ENCODE measurements at regions of chr6 and their contacts with region 1.

Region 1: DNA sequence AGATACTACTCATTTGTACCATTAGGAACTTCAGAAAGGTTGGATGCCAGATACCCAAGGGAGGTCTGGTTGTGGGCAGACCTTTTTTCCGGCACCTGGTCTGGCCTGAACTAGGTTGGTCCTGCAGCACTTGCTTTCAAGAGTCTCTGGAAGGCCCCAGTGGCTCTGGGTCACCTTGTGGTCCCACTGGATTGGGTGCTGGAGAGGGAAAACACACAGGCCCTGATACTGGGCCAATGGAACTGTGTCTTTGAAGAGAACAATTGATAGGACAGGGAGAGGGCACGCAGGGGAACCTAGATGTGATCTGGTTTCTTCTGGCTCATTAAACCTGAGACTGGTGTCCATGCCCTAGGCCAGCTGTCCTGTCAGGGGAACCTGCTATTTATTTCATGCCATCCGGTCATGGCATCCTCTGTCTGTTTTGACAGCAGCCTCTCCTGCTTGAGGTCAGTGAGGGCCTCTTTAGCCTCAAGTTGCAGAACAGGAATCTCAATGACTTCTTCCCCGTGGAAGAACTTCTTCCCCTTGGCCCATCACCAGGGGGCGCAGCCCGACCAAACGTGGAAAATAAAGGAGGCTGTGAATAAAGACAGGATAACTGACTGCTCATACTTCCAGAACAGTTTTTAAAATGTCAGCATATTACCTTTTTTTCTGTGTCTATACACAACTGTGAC is 25.0 kb downstream of the TAF8 start:
- DNase-seq: peak; percentile 73 to 85
- ATAC-seq: peak; percentile 58 to 87 (median 76)
- H3K4me3 ChIP-seq: no peak overlapping the region
- H3K27ac ChIP-seq: no peak overlapping the region
- H3K4me1 ChIP-seq: no peaks in the 10 kb centered on the region
- H3K27me3 ChIP-seq: no peaks in the 10 kb centered on the region
- CTCF ChIP-seq: peak; percentile 78

Region 2: GRCh38 chr6:41477572-41477971 is 597.7 kb before region 1 on chr6:
- intact Hi-C with region 1: no loop called
- DNase-seq: no peak
- ATAC-seq: no peak
- H3K4me3 ChIP-seq: no peak overlapping the region
- H3K27ac ChIP-seq: no peak overlapping the region
- H3K4me1 ChIP-seq: no peaks in the 10 kb centered on the region
- H3K27me3 ChIP-seq: peaks cover 0 to 13% (median 4%) of the 10 kb centered on the region in 3 donors
- CTCF ChIP-seq: no peak

Region 3: DNA sequence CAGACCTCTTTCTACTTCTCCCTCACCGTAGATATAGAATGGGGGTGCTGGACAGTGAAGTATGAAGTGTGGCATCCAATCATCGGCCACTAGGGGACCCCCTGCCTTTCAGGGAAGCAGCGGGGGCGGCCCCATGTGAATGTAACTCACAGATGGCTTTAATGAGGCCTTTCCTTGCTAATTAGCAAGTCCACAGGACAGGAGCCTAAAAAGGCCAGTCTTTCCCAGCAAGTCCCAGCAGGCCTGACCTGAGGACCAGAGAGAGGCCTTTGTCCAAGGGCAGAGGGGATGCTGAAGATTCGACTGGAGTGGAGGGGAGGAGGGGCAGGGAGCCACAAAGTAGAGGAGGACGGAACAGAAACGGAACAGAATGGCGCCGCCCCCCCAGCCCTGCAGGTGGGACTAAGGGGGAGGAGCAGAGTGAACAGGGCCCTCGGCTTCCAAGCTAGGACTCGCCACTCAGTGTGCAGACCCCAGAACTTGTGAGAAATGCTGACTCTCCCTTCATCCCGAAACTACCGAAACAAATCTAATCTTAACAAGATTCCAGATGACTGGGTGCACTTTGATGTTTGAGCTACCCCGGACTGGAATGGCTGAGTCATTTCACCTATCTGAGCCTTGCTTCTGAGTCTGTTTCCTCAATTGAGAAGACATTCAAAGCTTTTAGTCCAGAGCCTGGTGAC is 61.4 kb after region 1 on chr6:
- intact Hi-C with region 1: no loop called
- DNase-seq: no peak
- ATAC-seq: no peak
- H3K4me3 ChIP-seq: no peak overlapping the region
- H3K27ac ChIP-seq: no peak overlapping the region
- H3K4me1 ChIP-seq: no peaks in the 10 kb centered on the region
- H3K27me3 ChIP-seq: peaks cover 0 to 16% (median 0%) of the 10 kb centered on the region in 3 donors
- CTCF ChIP-seq: no peak

Region 4: GRCh38 chr6:42158011-42158410 is 82.7 kb after region 1 on chr6:
- intact Hi-C with region 1: loop called in 1 of 2 experiments (anchors 2 kb)
- DNase-seq: no peak
- ATAC-seq: peak in 1 of 4 donors; percentile 23
- H3K4me3 ChIP-seq: no peak overlapping the region
- H3K27ac ChIP-seq: no peak overlapping the region
- H3K4me1 ChIP-seq: no peaks in the 10 kb centered on the region
- H3K27me3 ChIP-seq: peaks cover 0 to 5% (median 4%) of the 10 kb centered on the region in 3 donors
- CTCF ChIP-seq: no peak

Region 5: DNA sequence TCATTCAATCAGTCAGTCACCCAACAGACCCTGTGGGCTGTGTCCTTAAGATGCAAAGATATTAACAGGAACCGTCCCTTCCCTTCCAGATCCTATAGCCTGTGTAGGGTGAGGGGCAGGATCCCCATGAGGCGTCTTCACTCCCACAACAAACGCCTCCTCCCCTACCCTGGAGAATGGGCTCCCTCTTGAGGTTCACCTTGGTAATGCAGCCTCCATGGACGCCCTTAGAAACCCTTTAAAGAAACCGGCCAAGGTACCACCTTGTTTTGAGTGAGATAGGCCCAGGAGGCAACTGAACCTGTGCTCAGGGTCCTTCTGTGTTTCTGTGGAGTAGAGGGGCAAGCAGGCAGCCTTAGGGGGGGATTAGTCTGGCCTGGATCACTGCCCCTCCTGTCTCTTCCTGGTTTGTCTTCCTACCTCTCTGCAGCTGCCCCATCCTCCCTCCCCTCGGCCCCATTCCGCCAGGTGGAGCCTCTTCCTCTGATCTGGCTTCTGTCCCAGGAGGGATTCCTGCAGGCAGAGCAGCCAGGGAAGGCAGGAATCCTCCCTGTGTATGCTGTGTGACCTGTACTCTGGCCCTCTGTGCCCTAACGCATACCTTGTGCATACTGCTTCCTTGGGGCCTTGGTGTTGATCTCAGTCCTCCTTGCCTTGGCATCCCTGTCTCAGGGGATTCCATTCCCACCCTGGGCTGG is 91.3 kb after region 1 on chr6:
- intact Hi-C with region 1: loop called (anchors 1 to 2 kb)
- DNase-seq: peak in 1 of 2 donors; percentile 45
- ATAC-seq: peak; percentile 70 to 82 (median 79)
- H3K4me3 ChIP-seq: no peak overlapping the region
- H3K27ac ChIP-seq: no peak overlapping the region
- H3K4me1 ChIP-seq: no peaks in the 10 kb centered on the region
- H3K27me3 ChIP-seq: peaks cover 0 to 3% (median 2%) of the 10 kb centered on the region in 3 donors
- CTCF ChIP-seq: peak; percentile 95

Region 6: DNA sequence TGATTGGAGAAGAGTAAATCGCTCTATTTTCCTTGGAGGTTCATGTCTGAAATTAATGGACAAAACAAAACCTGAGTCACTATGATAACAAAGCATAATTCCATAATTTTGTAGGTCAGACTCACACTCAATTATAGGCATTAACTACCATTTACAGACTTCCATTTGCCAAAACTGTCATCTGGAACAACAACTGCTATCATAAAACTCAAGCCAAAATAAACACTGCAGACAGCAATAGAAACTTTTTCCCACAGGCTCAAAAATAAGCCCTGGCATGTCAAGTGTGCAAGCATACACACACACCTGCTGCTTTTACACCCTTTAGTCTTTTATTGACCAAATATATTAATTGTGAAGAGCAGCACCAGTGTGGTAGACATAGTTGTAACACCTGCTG is 135.3 kb after region 1 on chr6:
- intact Hi-C with region 1: loop called in 1 of 2 experiments (anchors 5 kb)
- DNase-seq: no peak
- ATAC-seq: no peak
- H3K4me3 ChIP-seq: no peak overlapping the region
- H3K27ac ChIP-seq: no peak overlapping the region
- H3K4me1 ChIP-seq: no peaks in the 10 kb centered on the region
- H3K27me3 ChIP-seq: no peaks in the 10 kb centered on the region
- CTCF ChIP-seq: no peak

Region 7: GRCh38 chr6:42547407-42548329 is 472.4 kb after region 1 on chr6:
- intact Hi-C with region 1: loop called in 1 of 2 experiments (anchors 5 kb)
- DNase-seq: peak; percentile 84 to 89
- ATAC-seq: peak; percentile 96 to 99 (median 96)
- H3K4me3 ChIP-seq: peak overlapping the region; percentile 62
- H3K27ac ChIP-seq: no peak overlapping the region
- H3K4me1 ChIP-seq: no peaks in the 10 kb centered on the region
- H3K27me3 ChIP-seq: peaks cover 0 to 2% (median 0%) of the 10 kb centered on the region in 3 donors
- CTCF ChIP-seq: peak; percentile 95

Measured in psoas muscle (tissue), 8 donors.